ENCODE measurements at regions of chr5 and their contacts with region 1.

Region 1: DNA sequence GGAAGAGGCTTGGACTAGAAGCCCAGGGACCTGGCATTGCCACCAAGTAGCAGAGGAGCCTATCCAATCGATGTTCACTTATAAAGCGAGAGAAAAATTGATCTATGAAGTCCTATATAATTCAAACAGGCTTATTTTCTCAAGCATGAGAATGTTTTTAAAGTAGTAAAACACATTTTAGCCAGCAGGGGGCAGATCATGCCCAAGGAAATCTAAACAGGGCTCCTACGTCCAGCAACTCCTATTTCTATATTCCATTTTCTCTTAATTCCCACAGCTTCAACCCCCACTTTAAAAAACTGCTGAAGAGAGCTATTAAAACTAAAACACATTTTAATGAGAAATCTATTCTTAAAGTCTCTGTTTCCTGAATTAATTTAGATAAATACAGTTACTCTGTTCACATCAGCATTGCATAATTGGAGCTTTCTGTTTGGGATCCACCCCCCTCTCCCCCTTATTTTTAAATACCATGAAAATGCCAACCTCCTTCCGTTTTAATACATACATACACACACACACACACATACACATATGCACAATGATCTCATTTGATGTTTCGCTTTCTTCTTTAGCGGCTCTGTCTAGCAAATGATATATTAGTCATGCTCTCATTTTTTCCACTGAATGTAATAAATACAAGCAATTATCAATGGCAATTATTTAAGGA is 144.9 kb downstream of the MYO10 start:
- DNase-seq: peak; percentile 37
- H3K4me3 ChIP-seq: no peak overlapping the region
- H3K27ac ChIP-seq: no peak overlapping the region
- H3K4me1 ChIP-seq: no peaks in the 10 kb centered on the region
- CTCF ChIP-seq: peak; percentile 89

Region 2: DNA sequence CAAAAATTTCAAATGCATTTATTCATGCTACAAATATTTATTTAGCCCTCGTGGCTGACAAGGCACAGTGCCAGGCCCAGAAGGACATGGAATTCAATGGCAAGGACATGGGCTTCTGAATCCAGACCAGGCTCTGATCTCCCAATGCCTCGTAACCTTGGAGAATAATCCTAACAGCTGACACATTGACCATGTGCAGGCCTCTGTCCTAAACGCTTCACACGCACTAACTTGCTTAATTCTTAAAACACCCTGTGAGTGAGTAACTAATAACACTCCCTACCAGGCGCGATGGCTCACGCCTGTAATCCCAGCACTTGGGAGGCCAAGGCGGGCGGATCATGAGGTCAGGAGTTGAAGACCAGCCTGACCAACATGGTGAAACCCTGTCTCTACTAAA is 111.7 kb after region 1 on chr5:
- CTCF ChIA-PET with region 1: no interaction called
- POLR2A ChIA-PET with region 1: no interaction called
- intact Hi-C with region 1: no loop called
- DNase-seq: no peak
- H3K4me3 ChIP-seq: no peak overlapping the region
- H3K27ac ChIP-seq: no peak overlapping the region
- H3K4me1 ChIP-seq: no peaks in the 10 kb centered on the region
- CTCF ChIP-seq: no peak

Region 3: GRCh38 chr5:17132444-17133083 is 341.4 kb after region 1 on chr5:
- CTCF ChIA-PET with region 1: no interaction called
- POLR2A ChIA-PET with region 1: no interaction called
- intact Hi-C with region 1: loop called (anchors 2 kb)
- DNase-seq: peak; percentile 25
- H3K4me3 ChIP-seq: no peak overlapping the region
- H3K27ac ChIP-seq: no peak overlapping the region
- H3K4me1 ChIP-seq: no peaks in the 10 kb centered on the region
- CTCF ChIP-seq: peak; percentile 86

Region 4: GRCh38 chr5:17189381-17190036 is 398.3 kb after region 1 on chr5:
- CTCF ChIA-PET with region 1: no interaction called
- POLR2A ChIA-PET with region 1: no interaction called
- intact Hi-C with region 1: loop called (anchors 1 kb)
- DNase-seq: peak; percentile 82
- H3K4me3 ChIP-seq: no peak overlapping the region
- H3K27ac ChIP-seq: no peak overlapping the region
- H3K4me1 ChIP-seq: no peaks in the 10 kb centered on the region
- CTCF ChIP-seq: peak; percentile 94